ENCODE measurements at regions of chr6 and their contacts with region 1.

Region 1: DNA sequence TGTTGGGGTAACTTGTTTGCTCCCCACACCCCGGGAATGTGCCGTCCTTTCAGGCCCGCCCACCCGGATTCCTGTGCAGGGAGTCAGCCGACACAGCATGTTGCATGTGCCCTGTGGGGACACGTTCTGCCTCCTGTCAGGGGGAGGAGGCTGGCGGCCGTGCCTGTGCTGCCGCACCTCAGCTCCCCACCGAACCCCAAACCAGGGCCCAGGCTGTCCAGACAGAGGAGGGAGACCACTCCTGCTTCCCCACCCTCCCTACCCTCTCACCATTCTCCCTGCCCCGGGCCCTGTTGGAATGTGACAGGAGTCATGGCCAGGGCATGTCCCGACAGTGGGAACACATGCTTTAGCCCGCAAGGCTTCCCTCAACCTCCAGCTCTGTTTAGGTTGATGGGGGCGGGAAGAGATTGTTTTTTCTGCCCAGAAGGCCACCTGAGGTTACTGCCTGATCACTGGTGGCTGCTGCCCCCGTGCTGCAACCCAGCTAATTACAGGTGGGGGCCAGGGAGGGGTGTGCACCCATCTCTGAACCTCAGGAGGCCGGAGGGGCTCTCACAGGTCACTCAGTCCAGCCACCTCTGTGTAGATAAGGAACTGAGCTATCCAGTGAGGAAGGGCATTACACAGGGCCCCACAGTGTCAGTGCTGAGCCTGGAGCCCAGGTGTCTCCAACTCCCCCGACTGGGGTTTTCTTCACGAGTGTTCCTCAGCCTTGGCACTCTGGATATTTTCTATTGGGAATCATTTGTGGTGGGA is 13.6 kb downstream of the LRRC73 start:
- DNase-seq: peak; percentile 88
- H3K4me3 Mint-ChIP-seq: peak overlapping the region; percentile 43
- H3K27ac Mint-ChIP-seq: peak overlapping the region; percentile 88
- H3K4me1 Mint-ChIP-seq: peaks cover 53% of the 10 kb centered on the region
- H3K27me3 Mint-ChIP-seq: no peaks in the 10 kb centered on the region
- CTCF ChIP-seq: peak; percentile 91

Region 2: GRCh38 chr6:43386492-43386891 is 110.1 kb before region 1 on chr6:
- CTCF ChIA-PET with region 1: interaction called, 20 read pairs
- POLR2A ChIA-PET with region 1: interaction called, 6 read pairs
- intact Hi-C with region 1: no loop called
- DNase-seq: peak; percentile 29
- H3K4me3 Mint-ChIP-seq: no peak overlapping the region
- H3K27ac Mint-ChIP-seq: no peak overlapping the region
- H3K4me1 Mint-ChIP-seq: peaks cover 13% of the 10 kb centered on the region
- H3K27me3 Mint-ChIP-seq: no peaks in the 10 kb centered on the region
- CTCF ChIP-seq: peak; percentile 35

Region 3: GRCh38 chr6:43427406-43428111 is 69.0 kb before region 1 on chr6 and contains the start of gene ABCC10:
- CTCF ChIA-PET with region 1: interaction called, 4 read pairs
- POLR2A ChIA-PET with region 1: interaction called, 10 read pairs
- intact Hi-C with region 1: no loop called
- DNase-seq: peak; percentile 95
- H3K4me3 Mint-ChIP-seq: peak within 1 kb of the TSS; percentile 87
- H3K27ac Mint-ChIP-seq: peak within 1 kb of the TSS; percentile 63
- H3K4me1 Mint-ChIP-seq: peaks cover 10% of the 10 kb centered on the region
- H3K27me3 Mint-ChIP-seq: no peaks in the 10 kb centered on the region
- CTCF ChIP-seq: no peak
- total RNA-seq, gene ABCC10: 25.6 and 25.9 TPM in 2 replicates

Region 4: GRCh38 chr6:43442935-43443334 is 53.6 kb before region 1 on chr6:
- CTCF ChIA-PET with region 1: interaction called, 25 read pairs
- POLR2A ChIA-PET with region 1: interaction called, 27 read pairs
- intact Hi-C with region 1: no loop called
- DNase-seq: no peak
- H3K4me3 Mint-ChIP-seq: no peak overlapping the region
- H3K27ac Mint-ChIP-seq: no peak overlapping the region
- H3K4me1 Mint-ChIP-seq: no peaks in the 10 kb centered on the region
- H3K27me3 Mint-ChIP-seq: no peaks in the 10 kb centered on the region
- CTCF ChIP-seq: no peak

Region 5: GRCh38 chr6:43477235-43478007 is 19.1 kb before region 1 on chr6 and contains the start of gene TJAP1:
- CTCF ChIA-PET with region 1: interaction called, 36 read pairs
- POLR2A ChIA-PET with region 1: interaction called, 209 read pairs
- intact Hi-C with region 1: loop called (anchors 2 kb)
- DNase-seq: peak; percentile 88
- H3K4me3 Mint-ChIP-seq: peak within 1 kb of the TSS; percentile 86
- H3K27ac Mint-ChIP-seq: peak within 1 kb of the TSS; percentile 97
- H3K4me1 Mint-ChIP-seq: peaks cover 26% of the 10 kb centered on the region
- H3K27me3 Mint-ChIP-seq: no peaks in the 10 kb centered on the region
- CTCF ChIP-seq: no peak
- total RNA-seq, gene TJAP1: 70.9 and 78.9 TPM in 2 replicates

Region 6: GRCh38 chr6:43516697-43517504 is 20.4 kb after region 1 on chr6 and contains the starts of genes POLR1C and YIPF3:
- CTCF ChIA-PET with region 1: interaction called, 7 read pairs
- POLR2A ChIA-PET with region 1: interaction called, 27 read pairs
- intact Hi-C with region 1: no loop called
- DNase-seq: peak; percentile 98
- H3K4me3 Mint-ChIP-seq: no peak within 1 kb of the TSS
- H3K27ac Mint-ChIP-seq: no peak within 1 kb of the TSS
- H3K4me1 Mint-ChIP-seq: peaks cover 13% of the 10 kb centered on the region
- H3K27me3 Mint-ChIP-seq: no peaks in the 10 kb centered on the region
- CTCF ChIP-seq: no peak
- total RNA-seq, gene POLR1C: 54.9 and 63.6 TPM in 2 replicates
- total RNA-seq, gene YIPF3: 65.1 and 72.9 TPM in 2 replicates